ENCODE measurements at regions of chr1 and their contacts with region 1.

Region 1: DNA sequence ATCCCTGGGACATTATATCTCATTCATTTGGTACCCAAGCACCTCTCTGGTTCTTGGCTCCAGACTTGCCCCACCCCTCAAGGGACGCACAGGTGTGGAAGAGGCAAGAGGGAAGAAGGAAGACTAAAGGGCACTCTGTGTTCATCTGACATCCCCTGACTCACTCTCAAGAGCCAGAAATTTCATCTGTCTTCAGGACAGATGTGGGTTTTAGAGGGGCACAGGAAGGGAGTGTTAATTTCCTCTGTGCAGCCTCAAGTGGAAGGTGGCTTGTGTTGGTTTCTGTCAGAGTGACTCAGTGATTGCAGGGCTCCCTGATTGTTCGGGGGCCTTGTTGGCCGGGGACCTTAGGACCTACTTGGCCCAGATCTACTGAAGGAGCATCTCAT is 2.4 kb downstream of the C2CD4D start:
- DNase-seq: no peak

Region 2: GRCh38 chr1:151762941-151763921 is 74.0 kb before region 1 on chr1 and contains the start of gene MRPL9:
- CTCF ChIA-PET with region 1: no interaction called
- POLR2A ChIA-PET with region 1: interaction called, 16 read pairs
- DNase-seq: peak; percentile 96

Measured in HEK293T (cell line).